Endothelial cell of umbilical vein (primary cell): ENCODE measurements at regions of chr3 and their contacts with region 1.

Region 1: DNA sequence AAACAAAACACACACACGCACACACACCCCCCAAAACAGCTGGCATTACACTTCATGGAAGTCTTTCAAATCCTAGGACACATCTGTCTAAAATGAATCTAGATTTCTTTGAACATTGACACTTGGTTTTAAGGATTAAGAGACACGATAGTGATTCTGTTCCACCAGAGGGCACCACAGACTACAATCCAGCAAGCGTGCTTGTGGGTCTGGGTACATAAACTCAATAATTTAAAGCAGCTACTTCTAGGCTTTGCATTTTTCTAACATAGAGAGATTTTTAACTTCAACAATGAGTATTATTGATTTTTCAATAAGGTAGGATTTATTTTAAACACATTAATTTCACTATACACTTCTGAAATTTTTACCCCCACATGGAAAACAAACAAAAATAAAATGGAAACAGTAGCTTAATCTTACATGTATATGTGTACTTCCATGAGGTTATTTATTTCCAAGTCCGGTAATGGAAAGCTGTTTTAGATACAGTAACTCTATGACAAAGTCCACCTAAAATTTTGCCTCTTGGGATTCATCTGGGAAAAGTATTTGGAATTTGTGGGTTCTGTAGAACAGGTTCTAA is 564.0 kb upstream of the TGFBR2 start:
- DNase-seq: peak; percentile 88
- H3K4me3 ChIP-seq: no peak overlapping the region
- H3K27ac ChIP-seq: no peak overlapping the region
- H3K4me1 ChIP-seq: peaks cover 25% of the 10 kb centered on the region
- H3K27me3 ChIP-seq: no peaks in the 10 kb centered on the region
- CTCF ChIP-seq: peak; percentile 56
- POLR2A ChIP-seq: no peak

Region 2: DNA sequence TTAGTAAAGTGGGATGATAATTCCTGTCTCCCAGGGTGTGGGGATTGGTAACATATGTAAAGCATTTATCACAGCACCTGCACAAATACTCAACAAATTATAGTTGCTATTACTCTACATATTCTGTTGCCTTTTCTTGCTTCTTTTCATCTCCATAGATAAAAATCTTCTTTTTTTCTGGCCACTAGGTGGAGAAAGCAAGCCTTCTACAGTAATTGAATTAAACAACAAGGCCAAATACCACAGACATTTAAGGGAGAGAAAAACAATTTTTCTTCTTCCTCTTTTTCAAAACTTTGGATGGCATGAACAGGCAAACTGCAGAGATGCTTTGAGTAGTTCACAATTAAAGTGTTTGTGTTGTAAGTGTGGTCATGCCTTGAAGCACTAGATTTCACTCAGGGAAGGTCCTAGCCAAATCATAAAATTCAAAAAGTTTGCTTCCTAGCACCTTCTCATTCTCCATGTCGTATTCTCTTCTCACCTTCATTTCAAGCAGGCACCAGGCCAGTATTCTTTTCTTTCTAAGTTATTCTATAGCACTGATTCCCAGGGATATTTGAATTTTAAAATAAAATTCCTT is 70.6 kb after region 1 on chr3:
- CTCF ChIA-PET with region 1: interaction called, 20 read pairs
- POLR2A ChIA-PET with region 1: no interaction called
- dilution Hi-C with region 1: no loop called
- intact Hi-C with region 1: loop called (anchors 1 kb)
- DNase-seq: peak; percentile 76
- H3K4me3 ChIP-seq: no peak overlapping the region
- H3K27ac ChIP-seq: no peak overlapping the region
- H3K4me1 ChIP-seq: no peaks in the 10 kb centered on the region
- H3K27me3 ChIP-seq: peaks cover 0 to 2% of the 10 kb centered on the region in 2 experiments
- CTCF ChIP-seq: peak; percentile 26 to 37
- POLR2A ChIP-seq: no peak

Region 3: DNA sequence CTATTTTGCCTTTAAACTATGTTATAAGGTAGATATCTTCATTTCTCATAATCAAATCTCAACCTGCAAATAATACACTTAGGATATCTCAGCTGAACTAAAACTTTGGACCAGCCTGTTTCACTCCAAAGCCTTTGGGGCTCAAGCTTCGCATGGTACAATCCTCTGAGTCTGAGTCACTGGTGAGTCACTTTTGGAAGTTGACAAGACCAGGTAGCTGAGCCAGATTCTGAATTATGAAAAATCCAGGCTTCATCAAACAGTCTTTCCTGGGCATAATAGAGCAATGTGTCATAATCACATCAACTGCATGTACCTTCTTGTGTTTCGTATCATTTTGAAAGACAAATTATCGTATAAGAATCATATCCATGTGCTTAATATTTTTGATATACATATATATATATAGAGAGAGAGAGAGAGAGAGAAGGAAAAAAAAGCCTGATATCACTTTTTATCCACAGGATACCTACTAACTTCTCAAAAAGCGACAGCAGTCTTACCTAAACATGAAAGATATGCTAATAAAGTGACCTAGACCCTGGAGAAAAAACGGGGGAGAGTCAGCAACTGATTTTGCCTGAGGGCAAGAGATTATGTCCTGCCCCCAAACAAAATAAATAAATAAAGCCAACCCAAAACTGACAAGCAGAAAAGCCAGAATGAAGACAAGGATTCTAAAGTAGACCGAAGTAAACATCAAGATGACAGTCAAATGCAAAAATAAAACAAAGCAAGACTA is 300.1 kb after region 1 on chr3:
- CTCF ChIA-PET with region 1: interaction called, 8 read pairs
- POLR2A ChIA-PET with region 1: no interaction called
- dilution Hi-C with region 1: no loop called
- intact Hi-C with region 1: loop called (anchors 5 kb)
- DNase-seq: peak; percentile 94
- H3K4me3 ChIP-seq: peak overlapping the region in 1 of 3 experiments; percentile 32
- H3K27ac ChIP-seq: peak overlapping the region; percentile 98
- H3K4me1 ChIP-seq: peaks cover 62% of the 10 kb centered on the region
- H3K27me3 ChIP-seq: no peaks in the 10 kb centered on the region
- CTCF ChIP-seq: no peak
- POLR2A ChIP-seq: no peak

Region 4: GRCh38 chr3:30606301-30607031 is 564.1 kb after region 1 on chr3 and contains the start of gene TGFBR2:
- CTCF ChIA-PET with region 1: interaction called, 25 read pairs
- POLR2A ChIA-PET with region 1: interaction called, 4 read pairs
- dilution Hi-C with region 1: no loop called
- intact Hi-C with region 1: loop called (anchors 1 kb)
- DNase-seq: peak; percentile 100
- H3K4me3 ChIP-seq: peak within 1 kb of the TSS; percentile 57 to 99 (median 86)
- H3K27ac ChIP-seq: peak within 1 kb of the TSS; percentile 96
- H3K4me1 ChIP-seq: peaks cover 50% of the 10 kb centered on the region
- H3K27me3 ChIP-seq: no peaks in the 10 kb centered on the region
- CTCF ChIP-seq: peak; percentile 3 to 35
- POLR2A ChIP-seq: peak; percentile 79
- total RNA-seq, gene TGFBR2: 250 and 259 TPM in 2 replicates

Region 5: DNA sequence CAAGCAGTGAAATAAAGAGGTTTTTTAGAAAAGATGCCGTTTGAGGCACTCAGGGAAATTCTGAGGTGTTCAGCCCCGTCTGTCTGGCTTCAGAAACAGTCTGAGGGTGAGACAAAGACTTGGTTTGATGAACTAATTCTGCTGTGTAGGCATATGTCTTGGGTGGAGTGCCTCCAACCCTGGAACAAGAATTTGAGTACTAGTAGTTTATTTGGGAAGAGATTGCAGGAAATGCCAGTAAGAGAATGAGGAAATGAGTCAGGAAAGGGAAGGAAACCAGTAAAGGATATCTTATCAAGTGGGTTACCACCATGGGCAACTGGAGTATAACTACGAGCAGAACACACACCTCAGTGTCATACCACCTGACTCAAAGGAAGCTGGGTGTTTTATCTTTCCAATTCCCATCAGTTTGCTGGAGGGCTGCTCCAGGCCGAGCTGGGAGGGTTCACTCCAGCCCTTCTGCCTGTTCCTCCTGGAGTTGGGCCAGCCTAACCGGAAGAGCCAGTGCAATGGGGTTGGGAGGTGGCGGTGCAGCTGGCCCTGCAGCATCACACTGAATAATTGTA is 639.4 kb after region 1 on chr3:
- CTCF ChIA-PET with region 1: interaction called, 18 read pairs
- POLR2A ChIA-PET with region 1: no interaction called
- dilution Hi-C with region 1: no loop called
- intact Hi-C with region 1: no loop called
- DNase-seq: peak; percentile 99
- H3K4me3 ChIP-seq: no peak overlapping the region
- H3K27ac ChIP-seq: peak overlapping the region; percentile 98
- H3K4me1 ChIP-seq: peaks cover 92% of the 10 kb centered on the region
- H3K27me3 ChIP-seq: no peaks in the 10 kb centered on the region
- CTCF ChIP-seq: no peak
- POLR2A ChIP-seq: peak; percentile 87

Region 6: GRCh38 chr3:30751610-30752299 is 709.4 kb after region 1 on chr3:
- CTCF ChIA-PET with region 1: interaction called, 150 read pairs
- POLR2A ChIA-PET with region 1: no interaction called
- dilution Hi-C with region 1: loop called (anchors 25 kb)
- intact Hi-C with region 1: loop called (anchors 1 kb)
- DNase-seq: peak; percentile 78
- H3K4me3 ChIP-seq: no peak overlapping the region
- H3K27ac ChIP-seq: no peak overlapping the region
- H3K4me1 ChIP-seq: peaks cover 21% of the 10 kb centered on the region
- H3K27me3 ChIP-seq: no peaks in the 10 kb centered on the region
- CTCF ChIP-seq: peak; percentile 49 to 65
- POLR2A ChIP-seq: no peak